Heart right ventricle (tissue), 16 donors: ENCODE measurements at regions of chr4 and their contacts with region 1.

Region 1: GRCh38 chr4:109184491-109184961 is 117.9 kb downstream of the COL25A1 start:
- DNase-seq: peak; percentile 21 to 52
- ATAC-seq: peak; percentile 79 to 98 (median 96)
- H3K4me3 ChIP-seq: no peak overlapping the region
- H3K27ac ChIP-seq: peak overlapping the region; percentile 23 to 74 (median 62)
- H3K4me1 ChIP-seq: peaks cover 0 to 28% (median 17%) of the 10 kb centered on the region in 9 donors
- H3K27me3 ChIP-seq: no peaks in the 10 kb centered on the region
- CTCF ChIP-seq: no peak

Region 2: DNA sequence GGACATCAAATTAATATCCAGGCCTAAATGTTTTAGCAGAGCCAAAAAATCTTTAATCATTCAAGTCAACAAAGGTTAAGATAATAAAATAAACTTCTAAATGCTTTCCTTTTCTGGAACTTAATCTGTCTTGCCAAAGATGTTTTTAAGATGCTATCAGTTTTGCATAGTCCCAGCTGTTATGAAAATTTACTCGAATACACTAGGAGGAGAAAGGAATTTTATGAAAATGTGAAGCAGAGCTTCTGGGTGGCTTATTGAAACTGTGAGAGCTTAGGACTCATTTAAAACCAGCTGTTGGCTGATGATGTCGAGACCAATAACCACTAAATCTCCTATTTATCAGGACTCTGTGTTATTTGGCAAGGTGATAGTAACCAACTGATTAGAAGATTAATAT is 219.5 kb before region 1 on chr4:
- intact Hi-C with region 1: loop called in 1 of 10 experiments (anchors 10 kb)
- DNase-seq: no peak
- ATAC-seq: peak in 2 of 8 donors; percentile 34 to 47
- H3K4me3 ChIP-seq: no peak overlapping the region
- H3K27ac ChIP-seq: no peak overlapping the region
- H3K4me1 ChIP-seq: peaks cover 0 to 20% (median 0%) of the 10 kb centered on the region in 9 donors
- H3K27me3 ChIP-seq: no peaks in the 10 kb centered on the region
- CTCF ChIP-seq: no peak

Region 3: DNA sequence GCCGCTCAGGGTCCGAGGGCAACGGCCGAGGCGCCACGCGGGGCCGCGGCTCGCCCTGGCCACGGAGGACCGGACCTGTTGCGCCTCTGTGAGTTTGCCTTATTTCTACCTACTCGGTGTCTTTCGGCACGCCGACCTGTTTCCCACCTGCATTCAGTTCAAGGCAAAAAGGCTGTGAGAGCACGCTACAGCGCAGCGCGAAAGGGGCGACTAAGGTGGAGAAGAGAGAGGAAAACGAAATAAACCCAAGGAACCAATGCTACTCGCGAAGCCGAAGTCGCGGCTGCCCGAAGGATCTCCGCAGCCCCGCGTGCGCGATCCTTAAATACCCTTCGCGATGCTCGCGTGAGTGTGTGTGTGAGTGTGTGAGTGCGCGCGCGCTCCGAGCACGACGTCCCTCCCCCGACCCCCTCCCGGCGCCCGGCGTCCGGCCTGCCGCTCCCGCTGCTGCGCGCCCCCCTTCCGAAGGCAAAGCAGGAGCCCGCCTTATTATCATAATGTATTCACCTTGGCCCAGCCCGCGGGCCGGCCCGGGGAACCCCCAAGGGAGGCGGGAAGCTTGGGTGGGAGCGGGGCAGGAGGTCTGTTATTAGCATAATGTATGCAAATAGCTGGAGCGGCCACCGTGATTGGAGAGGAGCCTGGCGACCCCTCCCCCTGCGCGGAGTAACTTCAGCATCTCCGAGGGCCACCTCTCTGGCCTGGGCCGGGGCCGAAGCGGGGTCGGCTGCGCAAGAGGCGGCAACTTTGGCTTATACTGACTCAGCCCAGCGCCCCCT is 118.0 kb after region 1 on chr4 and contains the start of gene COL25A1:
- intact Hi-C with region 1: loop called in 2 of 10 experiments (anchors 5 kb)
- DNase-seq: peak; percentile 49 to 53
- ATAC-seq: peak; percentile 75 to 91 (median 87)
- H3K4me3 ChIP-seq: peak within 1 kb of the TSS; percentile 39 to 78 (median 63)
- H3K27ac ChIP-seq: peak within 1 kb of the TSS in 4 of 10 donors; percentile 21 to 59 (median 28)
- H3K4me1 ChIP-seq: peaks cover 0 to 20% (median 11%) of the 10 kb centered on the region in 9 donors
- H3K27me3 ChIP-seq: peaks cover 0 to 61% (median 26%) of the 10 kb centered on the region in 7 donors
- CTCF ChIP-seq: no peak
- total RNA-seq, gene COL25A1: 0.07 to 1.2 (median 0.49) TPM